Heart right ventricle (tissue), 16 donors: ENCODE measurements at regions of chr2 and their contacts with region 1.

Region 1: DNA sequence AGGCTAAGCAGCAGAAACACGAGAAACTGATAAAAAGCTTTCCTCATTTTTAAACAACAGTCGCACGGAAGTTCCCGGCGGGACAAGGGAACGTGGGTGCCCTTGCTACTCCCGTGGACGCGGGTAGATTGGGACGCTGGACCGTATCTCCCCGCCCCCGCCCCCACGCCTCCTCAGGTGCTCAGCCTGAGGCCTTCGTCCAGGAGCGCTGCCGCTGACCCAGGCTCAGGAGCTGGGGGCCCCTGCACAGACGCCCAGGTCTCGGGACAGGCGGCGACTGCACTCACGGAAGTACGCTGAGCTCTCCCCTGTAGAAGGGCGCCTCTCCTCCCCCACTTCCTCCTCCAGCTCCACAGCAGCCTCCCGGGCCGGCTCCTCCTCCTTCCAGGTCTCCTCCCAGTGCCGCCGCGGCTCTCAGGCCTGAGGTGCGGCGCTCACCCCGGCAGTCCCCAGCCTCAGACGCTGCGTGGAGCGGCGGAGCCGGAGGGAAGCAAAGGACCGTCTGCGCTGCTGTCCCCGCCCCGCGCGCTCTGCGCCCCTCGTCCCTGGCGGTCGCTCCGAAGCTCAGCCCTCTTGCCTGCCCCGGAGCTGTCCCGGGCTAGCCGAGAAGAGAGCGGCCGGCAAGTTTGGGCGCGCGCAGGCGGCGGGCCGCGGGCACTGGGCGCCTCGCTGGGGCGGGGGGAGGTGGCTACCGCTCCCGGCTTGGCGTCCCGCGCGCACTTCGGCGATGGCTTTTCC is at the start of gene ITGAV:
- DNase-seq: peak; percentile 93 to 94
- ATAC-seq: peak; percentile 95 to 98 (median 97)
- H3K4me3 ChIP-seq: peak within 1 kb of the TSS; percentile 56 to 94 (median 74)
- H3K27ac ChIP-seq: peak within 1 kb of the TSS; percentile 86 to 98 (median 95)
- H3K4me1 ChIP-seq: peaks cover 4 to 45% (median 34%) of the 10 kb centered on the region in 9 donors
- H3K27me3 ChIP-seq: no peaks in the 10 kb centered on the region
- CTCF ChIP-seq: peak in 2 of 9 donors; percentile 10 to 20
- total RNA-seq, gene ITGAV: 153 to 292 (median 228) TPM

Region 2: GRCh38 chr2:186167140-186167539 is 422.6 kb before region 1 on chr2:
- intact Hi-C with region 1: no loop called
- DNase-seq: no peak
- ATAC-seq: no peak
- H3K4me3 ChIP-seq: no peak overlapping the region
- H3K27ac ChIP-seq: no peak overlapping the region
- H3K4me1 ChIP-seq: no peaks in the 10 kb centered on the region
- H3K27me3 ChIP-seq: no peaks in the 10 kb centered on the region
- CTCF ChIP-seq: no peak

Region 3: DNA sequence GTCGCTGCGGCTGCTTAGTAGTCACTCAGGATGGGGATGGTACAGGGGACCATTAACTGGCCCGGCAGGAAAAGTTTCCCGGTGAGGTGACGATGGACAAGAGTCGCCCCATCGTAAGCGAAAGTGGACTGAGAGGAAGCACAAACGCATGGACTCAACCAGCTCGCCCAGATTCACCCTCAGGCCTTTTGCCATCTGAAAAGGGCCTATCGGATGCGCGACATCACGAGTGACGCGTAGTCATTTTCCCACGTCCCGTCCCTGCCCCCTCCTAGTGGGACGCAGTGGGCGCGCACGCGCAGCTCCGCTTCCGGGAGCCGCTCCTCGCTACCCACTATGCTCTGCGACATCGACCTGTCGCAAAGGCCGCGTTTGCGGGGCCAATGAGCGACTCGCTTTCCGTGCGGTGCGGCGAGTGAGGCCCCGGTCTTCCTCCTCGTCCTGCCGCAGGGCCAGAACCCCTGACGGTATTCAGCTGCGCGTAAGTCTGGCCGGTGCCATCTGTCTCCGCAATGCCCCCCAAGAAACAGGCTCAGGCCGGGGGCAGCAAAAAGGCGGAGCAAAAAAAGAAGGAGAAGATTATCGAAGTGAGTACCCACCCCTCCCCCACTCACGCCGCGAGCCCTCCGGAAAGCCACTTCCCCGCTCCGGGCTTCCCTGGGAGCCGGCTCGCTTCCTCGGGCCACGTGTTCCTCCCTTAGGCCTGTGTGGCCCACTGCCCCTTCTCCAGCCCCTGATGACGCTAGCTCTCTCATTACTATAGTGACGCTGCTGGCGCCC is 103.7 kb before region 1 on chr2 and contains the start of gene ZC3H15:
- intact Hi-C with region 1: loop called in 2 of 10 experiments (anchors 5 to 10 kb)
- DNase-seq: peak; percentile 97 to 98
- ATAC-seq: peak; percentile 99 to 100 (median 99)
- H3K4me3 ChIP-seq: peak within 1 kb of the TSS; percentile 57 to 96 (median 84)
- H3K27ac ChIP-seq: peak within 1 kb of the TSS; percentile 10 to 94 (median 92)
- H3K4me1 ChIP-seq: peaks cover 0 to 61% (median 52%) of the 10 kb centered on the region in 9 donors
- H3K27me3 ChIP-seq: no peaks in the 10 kb centered on the region
- CTCF ChIP-seq: no peak
- total RNA-seq, gene ZC3H15: 25.1 to 35.9 (median 30.7) TPM

Region 4: GRCh38 chr2:186503848-186504606 is 85.8 kb before region 1 on chr2:
- intact Hi-C with region 1: loop called in 2 of 10 experiments (anchors 5 to 10 kb)
- DNase-seq: no peak
- ATAC-seq: peak in 1 of 8 donors; percentile 44
- H3K4me3 ChIP-seq: no peak overlapping the region
- H3K27ac ChIP-seq: no peak overlapping the region
- H3K4me1 ChIP-seq: peaks cover 0 to 6% (median 0%) of the 10 kb centered on the region in 9 donors
- H3K27me3 ChIP-seq: no peaks in the 10 kb centered on the region
- CTCF ChIP-seq: peak; percentile 59 to 79 (median 66)

Region 5: DNA sequence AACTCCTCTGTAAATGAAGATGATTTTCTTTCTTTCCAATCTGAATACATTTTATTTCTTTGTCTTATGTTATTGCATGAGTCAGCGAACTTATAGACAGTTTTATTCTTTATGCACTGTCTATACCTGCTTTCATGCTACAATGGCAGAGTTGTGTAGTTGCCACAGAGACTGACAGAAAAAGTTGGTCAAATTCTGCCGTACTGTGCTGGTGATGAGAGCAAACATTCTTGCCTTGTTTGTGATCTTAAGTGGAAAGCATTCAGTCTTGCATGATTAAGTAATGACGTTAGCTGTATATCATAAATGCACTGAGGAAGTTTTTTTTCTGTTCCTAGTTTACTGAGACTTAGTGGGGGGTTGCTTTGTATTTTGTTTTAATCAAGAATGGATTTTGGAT is 70.8 kb before region 1 on chr2:
- intact Hi-C with region 1: loop called in 2 of 10 experiments (anchors 5 to 10 kb)
- DNase-seq: no peak
- ATAC-seq: no peak
- H3K4me3 ChIP-seq: no peak overlapping the region
- H3K27ac ChIP-seq: no peak overlapping the region
- H3K4me1 ChIP-seq: peaks cover 0 to 7% (median 0%) of the 10 kb centered on the region in 9 donors
- H3K27me3 ChIP-seq: no peaks in the 10 kb centered on the region
- CTCF ChIP-seq: no peak

Region 6: GRCh38 chr2:186607660-186608324 is 18.0 kb after region 1 on chr2:
- intact Hi-C with region 1: loop called in 1 of 10 experiments (anchors 2 kb)
- DNase-seq: peak in 1 of 2 donors; percentile 16
- ATAC-seq: peak; percentile 55 to 92 (median 82)
- H3K4me3 ChIP-seq: peak overlapping the region in 9 of 10 donors; percentile 6 to 49 (median 43)
- H3K27ac ChIP-seq: peak overlapping the region; percentile 1 to 78 (median 69)
- H3K4me1 ChIP-seq: peaks cover 6 to 73% (median 42%) of the 10 kb centered on the region in 9 donors
- H3K27me3 ChIP-seq: no peaks in the 10 kb centered on the region
- CTCF ChIP-seq: no peak

Region 7: DNA sequence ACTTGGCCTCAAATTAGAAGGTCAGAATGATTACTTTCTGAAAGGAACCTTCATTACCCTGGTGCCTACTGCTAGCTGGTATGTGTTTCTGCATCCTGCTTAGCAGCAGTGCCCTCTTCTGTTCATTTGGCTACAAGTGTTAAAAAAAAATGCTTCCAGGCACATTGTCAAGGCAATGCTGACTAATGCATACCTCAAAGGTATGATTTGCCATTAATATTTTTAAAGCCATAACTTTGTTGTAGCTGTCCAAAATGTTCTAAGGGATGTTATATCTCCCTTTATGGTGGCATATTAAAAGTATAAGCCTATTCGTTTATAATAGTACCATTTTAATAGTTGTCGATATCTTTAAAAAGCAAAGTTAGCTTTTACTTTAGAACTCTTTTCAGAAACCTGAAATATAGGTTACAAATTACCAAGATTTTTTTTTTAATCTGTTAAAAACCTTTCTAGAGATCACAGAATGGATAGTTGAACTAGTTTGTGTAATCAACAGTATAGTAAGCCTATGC is 52.1 kb after region 1 on chr2:
- intact Hi-C with region 1: loop called in 6 of 10 experiments (anchors 5 to 10 kb)
- DNase-seq: peak in 1 of 2 donors; percentile 45
- ATAC-seq: peak; percentile 75 to 94 (median 84)
- H3K4me3 ChIP-seq: no peak overlapping the region
- H3K27ac ChIP-seq: peak overlapping the region in 1 of 10 donors; percentile 41
- H3K4me1 ChIP-seq: peaks cover 0 to 23% (median 0%) of the 10 kb centered on the region in 9 donors
- H3K27me3 ChIP-seq: no peaks in the 10 kb centered on the region
- CTCF ChIP-seq: peak; percentile 46 to 85 (median 75)